ENCODE measurements at regions of chr7 and their contacts with region 1.

Region 1: DNA sequence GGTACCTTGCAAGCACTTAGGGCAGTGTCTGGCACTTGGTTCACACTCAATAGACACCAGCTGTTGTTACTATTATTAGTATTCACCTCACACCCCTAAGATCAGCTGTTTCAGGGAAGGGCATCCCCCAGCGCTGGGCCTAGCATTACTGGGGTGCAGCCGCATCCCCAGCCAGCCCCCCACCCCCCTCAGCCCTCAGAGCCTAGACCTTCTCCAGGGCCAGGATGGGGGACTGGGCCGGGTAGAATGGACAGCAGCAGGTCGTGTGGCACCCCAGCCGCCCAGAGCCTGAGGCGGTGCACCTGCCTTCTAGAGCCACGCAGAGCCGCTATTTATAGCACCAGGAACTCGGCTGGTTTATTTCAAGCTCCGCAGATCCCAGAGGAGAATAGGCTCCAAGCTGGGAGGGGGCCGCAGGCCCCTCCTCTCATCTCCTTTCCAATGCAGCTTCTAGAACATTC is 60.5 kb downstream of the GTF2IRD1 start:
- DNase-seq: no peak
- H3K4me3 ChIP-seq: no peak overlapping the region
- H3K27ac ChIP-seq: peak overlapping the region in 38 of 59 donors; percentile 2 to 85 (median 54)
- H3K27me3 ChIP-seq: no peaks in the 10 kb centered on the region
- CTCF ChIP-seq: no peak

Region 2: DNA sequence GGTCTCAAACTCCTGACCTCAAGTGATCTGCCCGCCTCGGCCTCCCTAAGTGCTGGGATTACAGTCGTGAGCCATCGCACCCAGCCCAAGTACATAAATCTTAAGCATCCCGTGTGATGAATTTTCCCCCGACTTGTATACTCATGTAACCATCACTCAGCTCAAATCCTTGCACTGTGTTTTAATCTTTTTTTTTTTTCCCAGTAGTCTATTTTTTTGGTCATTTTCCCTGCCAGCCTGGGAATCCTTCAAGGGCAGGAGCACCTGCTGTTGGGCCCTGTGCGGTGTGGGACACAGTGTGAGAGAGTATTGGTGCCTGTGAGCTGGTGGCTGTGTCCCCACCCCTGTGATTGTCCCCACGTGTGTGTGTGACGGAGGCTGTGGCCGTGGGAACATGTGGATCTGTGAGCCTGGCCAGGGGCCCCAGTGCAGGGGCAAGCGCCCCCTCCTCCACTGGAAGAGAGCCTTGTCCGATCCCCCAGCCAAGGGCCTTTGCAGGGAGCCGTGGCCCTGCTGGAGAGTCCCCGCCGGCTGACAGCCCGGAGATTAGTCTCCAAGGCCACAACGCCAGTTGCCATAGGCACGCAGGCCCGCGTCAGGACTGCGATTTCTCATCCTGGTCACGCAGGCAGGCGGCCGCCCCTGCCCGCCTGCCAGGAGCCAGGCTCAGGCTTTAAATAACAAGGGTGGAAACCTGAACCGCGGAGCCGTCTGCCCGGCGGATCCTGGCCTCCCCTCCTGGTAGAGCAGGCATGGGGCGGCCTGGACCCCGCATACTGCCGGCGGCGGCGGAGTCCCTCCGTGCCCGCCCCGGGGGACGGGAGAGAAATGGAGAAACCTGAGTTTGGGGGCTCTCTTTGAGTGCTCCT is 34.0 kb before region 1 on chr7:
- intact Hi-C with region 1: loop called in 1 of 2 experiments (anchors 5 kb)
- DNase-seq: peak; percentile 65 to 89 (median 83)
- H3K4me3 ChIP-seq: peak overlapping the region; percentile 9 to 65 (median 46)
- H3K27ac ChIP-seq: peak overlapping the region; percentile 29 to 97 (median 90)
- H3K27me3 ChIP-seq: no peaks in the 10 kb centered on the region
- CTCF ChIP-seq: peak in 2 of 56 donors; percentile 6 to 9

Measured in dorsolateral prefrontal cortex (tissue), 120 donors.